Activated T-helper 1 cell treated with anti-CD3 and anti-CD28 coated beads, Interleukin-12 subunit alpha, Interleukin-12 subunit beta, Interleukin-2, Interleukin-4 antibody, amounts not matched to agents 30 ng/mL and 10 ng/mL and 1 ng/mL, durations not matched to agents 14 hours and 24 hours and 36 hours (primary cell): ENCODE measurements at regions of chr13 and their contacts with region 1.

Region 1: GRCh38 chr13:39016787-39017186 is 21.1 kb downstream of the PROSER1 start:
- DNase-seq: no peak
- H3K4me3 Mint-ChIP-seq: no peak overlapping the region
- H3K27ac Mint-ChIP-seq: peak overlapping the region; percentile 15
- H3K4me1 Mint-ChIP-seq: peaks cover 24% of the 10 kb centered on the region
- H3K27me3 Mint-ChIP-seq: no peaks in the 10 kb centered on the region

Region 2: GRCh38 chr13:38914070-38914469 is 102.7 kb before region 1 on chr13:
- intact Hi-C with region 1: loop called (anchors 5 kb)
- DNase-seq: no peak
- H3K4me3 Mint-ChIP-seq: no peak overlapping the region
- H3K27ac Mint-ChIP-seq: no peak overlapping the region
- H3K4me1 Mint-ChIP-seq: no peaks in the 10 kb centered on the region
- H3K27me3 Mint-ChIP-seq: no peaks in the 10 kb centered on the region

Region 3: DNA sequence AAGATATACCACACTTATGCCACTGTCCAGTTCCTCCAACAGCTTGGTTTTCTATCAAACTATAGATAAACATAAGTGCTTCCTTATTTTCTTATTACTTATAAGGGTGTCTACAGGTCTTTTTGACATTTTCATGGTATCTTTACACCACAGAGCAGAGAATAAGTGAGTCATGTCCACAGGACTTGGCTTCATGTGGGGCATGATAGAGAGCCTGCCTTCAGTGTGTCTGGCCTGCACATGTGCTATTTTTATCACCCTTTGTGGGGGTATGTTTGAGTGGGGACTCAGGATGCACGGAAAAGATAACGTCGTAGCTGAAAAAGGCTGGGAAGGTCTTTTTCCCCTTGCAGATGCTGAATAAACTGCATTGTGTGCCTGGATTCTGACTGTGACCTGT is 18.0 kb before region 1 on chr13:
- intact Hi-C with region 1: loop called (anchors 1 kb)
- DNase-seq: no peak
- H3K4me3 Mint-ChIP-seq: no peak overlapping the region
- H3K27ac Mint-ChIP-seq: no peak overlapping the region
- H3K4me1 Mint-ChIP-seq: no peaks in the 10 kb centered on the region
- H3K27me3 Mint-ChIP-seq: no peaks in the 10 kb centered on the region